Calu3 (cell line): ENCODE measurements at regions of chr3 and their contacts with region 1.

Region 1: DNA sequence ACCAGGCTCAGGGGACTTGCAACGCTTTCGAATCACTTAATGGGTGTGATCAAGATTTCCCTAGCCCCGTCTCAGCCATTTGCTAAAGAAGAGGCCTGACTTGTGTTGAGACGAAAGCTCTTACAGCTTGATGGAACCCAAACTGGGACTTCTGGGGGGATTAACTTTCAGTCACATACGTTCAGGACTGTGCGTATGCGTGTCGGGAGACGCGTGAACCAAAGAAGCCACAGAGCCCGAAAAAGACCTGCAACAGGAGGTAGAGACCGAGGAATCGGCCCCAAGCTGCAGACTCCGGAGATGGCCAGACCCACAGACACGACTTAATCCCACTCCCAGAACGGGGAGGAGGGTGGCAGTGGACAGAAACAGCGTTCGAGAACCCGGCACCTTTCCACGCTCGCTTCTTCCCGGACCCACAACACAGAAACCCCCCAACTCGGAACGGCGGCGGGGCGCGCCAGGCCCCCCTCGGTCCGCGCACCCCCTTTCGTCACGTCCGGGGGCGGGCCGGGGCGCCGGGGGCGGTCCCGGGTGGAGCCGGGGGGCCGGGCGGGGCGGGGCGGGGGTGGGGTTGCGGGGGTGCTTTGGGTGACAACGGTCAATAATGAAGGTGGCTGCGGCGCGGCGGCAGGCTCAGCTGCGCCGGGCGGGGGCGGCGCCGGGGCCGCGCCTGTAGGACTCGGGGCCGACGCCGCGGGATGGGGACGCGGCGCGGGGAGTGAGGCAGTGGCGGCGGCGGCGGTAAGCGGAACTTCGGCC is at the start of gene ATP11B:
- DNase-seq: peak; percentile 90
- H3K4me3 Mint-ChIP-seq: peak within 1 kb of the TSS; percentile 90
- H3K27ac Mint-ChIP-seq: peak within 1 kb of the TSS; percentile 87
- H3K4me1 Mint-ChIP-seq: peaks cover 26% of the 10 kb centered on the region
- H3K27me3 Mint-ChIP-seq: no peaks in the 10 kb centered on the region
- CTCF ChIP-seq: no peak
- total RNA-seq, gene ATP11B: 81.9 and 84.0 TPM in 2 replicates

Region 2: GRCh38 chr3:182740710-182741109 is 52.4 kb before region 1 on chr3:
- CTCF ChIA-PET with region 1: interaction called, 10 read pairs
- intact Hi-C with region 1: loop called (anchors 1 kb)
- DNase-seq: peak; percentile 83
- H3K4me3 Mint-ChIP-seq: peak overlapping the region; percentile 27
- H3K27ac Mint-ChIP-seq: peak overlapping the region; percentile 87
- H3K4me1 Mint-ChIP-seq: peaks cover 37% of the 10 kb centered on the region
- H3K27me3 Mint-ChIP-seq: no peaks in the 10 kb centered on the region
- CTCF ChIP-seq: no peak

Region 3: GRCh38 chr3:182829761-182830405 is 36.8 kb after region 1 on chr3:
- CTCF ChIA-PET with region 1: no interaction called
- intact Hi-C with region 1: loop called (anchors 2 kb)
- DNase-seq: peak; percentile 14
- H3K4me3 Mint-ChIP-seq: no peak overlapping the region
- H3K27ac Mint-ChIP-seq: no peak overlapping the region
- H3K4me1 Mint-ChIP-seq: no peaks in the 10 kb centered on the region
- H3K27me3 Mint-ChIP-seq: no peaks in the 10 kb centered on the region
- CTCF ChIP-seq: no peak